ENCODE measurements at regions of chr2 and their contacts with region 1.

Region 1: GRCh38 chr2:222903234-222904220 is 42.7 kb downstream of the ACSL3 start:
- DNase-seq: no peak
- ATAC-seq: peak; percentile 84

Region 2: DNA sequence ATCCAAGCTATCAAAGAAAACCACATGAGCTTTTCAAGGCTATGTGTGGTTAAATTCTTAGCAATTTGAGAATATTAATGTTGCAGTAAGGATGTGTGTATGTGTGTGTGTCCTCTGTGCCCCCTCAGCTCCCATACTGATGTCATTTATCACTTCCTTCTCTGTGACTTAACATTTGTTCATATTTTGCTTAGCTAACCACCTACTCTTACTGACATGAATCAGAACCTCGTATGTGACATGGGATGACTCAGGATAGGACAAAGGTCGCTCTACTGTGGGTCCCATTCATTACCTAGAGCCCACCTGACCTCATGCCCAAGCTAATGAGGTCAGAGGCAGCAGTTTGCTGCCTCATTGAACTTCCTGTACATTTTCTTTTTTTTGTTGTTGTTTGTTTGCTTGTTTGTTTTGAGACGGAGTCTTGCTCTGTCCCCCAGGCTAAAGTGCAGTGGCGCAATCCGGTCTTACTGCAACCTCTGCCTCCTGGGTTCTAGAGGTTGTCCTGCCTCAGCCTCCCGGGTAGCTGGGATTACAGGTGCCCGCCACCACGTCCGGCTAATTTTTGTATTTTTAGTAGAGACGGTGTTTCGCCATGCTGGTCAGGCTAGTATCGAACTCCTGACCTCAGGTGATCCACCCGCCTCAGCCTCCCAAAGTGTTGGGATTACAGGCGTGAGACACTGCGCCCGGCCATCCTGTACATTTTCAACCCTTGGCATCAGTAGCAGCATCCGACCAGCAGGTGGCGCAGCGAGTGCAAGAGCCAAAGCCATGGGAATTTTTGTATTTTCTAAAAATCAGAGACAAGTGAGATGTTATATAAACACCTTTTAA is 195.6 kb before region 1 on chr2:
- intact Hi-C with region 1: loop called (anchors 5 kb)
- DNase-seq: peak; percentile 92
- ATAC-seq: peak; percentile 82

Region 3: DNA sequence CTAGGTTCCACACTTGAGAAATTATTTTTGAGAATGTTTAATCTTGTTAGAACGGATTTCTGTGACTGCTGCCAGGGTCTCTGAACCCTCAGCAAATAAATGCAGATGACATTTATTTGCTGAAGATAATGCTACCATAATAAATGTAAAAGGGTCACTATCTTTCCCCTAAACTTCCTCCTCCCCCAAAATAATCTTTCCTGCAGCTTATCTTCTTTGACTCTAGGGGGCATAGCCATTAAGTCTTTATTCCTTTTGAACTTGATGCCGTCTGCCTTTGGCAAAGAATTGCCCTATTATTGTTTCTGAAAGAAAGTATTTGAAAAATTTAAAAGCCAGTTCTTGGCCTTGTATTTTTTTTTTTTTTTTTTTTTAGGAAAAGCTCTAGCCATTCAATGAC is 106.3 kb before region 1 on chr2:
- intact Hi-C with region 1: loop called (anchors 10 kb)
- DNase-seq: no peak
- ATAC-seq: no peak

Region 4: DNA sequence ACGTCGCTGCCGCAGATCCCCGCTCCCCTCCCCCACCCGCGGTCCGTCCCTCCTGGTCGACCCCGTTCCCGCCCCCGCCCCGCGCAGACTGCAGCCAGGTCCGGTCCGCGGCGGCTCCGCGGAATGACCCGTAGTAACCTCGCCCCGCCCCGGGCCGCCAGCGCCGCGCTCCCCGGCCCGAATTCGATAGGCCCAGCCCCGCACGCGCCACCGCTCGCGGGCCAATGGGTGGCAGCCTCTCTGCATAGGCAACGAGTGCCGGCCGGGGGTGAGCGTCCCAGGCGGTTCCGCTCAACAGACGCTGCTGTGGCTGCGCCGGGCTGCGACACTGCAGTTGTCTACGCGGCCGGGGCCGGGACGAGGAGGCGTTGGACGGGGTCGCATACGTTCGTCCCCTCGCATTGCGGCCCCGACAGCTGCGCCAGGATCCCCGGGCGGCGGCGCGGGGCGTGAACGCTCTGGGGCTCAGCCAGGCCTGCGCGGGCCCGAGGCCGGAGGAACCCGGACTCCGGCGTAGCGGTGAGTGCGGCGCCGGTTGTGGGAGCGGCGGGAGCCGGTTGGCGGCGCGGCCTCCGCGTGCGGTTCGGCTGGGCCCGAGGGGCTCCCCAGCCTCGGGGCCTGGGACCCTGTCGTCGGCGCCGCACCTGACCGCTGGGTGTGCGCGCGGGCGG is 42.7 kb before region 1 on chr2 and contains the start of gene ACSL3:
- intact Hi-C with region 1: loop called (anchors 5 kb)
- DNase-seq: peak; percentile 99
- ATAC-seq: peak; percentile 97
- total RNA-seq, gene ACSL3: 50.8 TPM